Right lobe of liver (tissue), 6 donors: ENCODE measurements at regions of chr14 and their contacts with region 1.

Region 1: GRCh38 chr14:59632381-59632780 is 55.8 kb upstream of the CCDC175 start:
- DNase-seq: peak in 1 of 3 donors; percentile 25
- ATAC-seq: peak; percentile 76 to 86 (median 82)
- H3K4me3 ChIP-seq: no peak overlapping the region
- H3K27ac ChIP-seq: no peak overlapping the region
- H3K4me1 ChIP-seq: peaks cover 0 to 5% (median 0%) of the 10 kb centered on the region in 4 donors
- H3K27me3 ChIP-seq: peaks cover 0 to 9% of the 10 kb centered on the region in 2 donors
- CTCF ChIP-seq: peak; percentile 52 to 65 (median 62)
- POLR2A ChIP-seq: no peak

Region 2: DNA sequence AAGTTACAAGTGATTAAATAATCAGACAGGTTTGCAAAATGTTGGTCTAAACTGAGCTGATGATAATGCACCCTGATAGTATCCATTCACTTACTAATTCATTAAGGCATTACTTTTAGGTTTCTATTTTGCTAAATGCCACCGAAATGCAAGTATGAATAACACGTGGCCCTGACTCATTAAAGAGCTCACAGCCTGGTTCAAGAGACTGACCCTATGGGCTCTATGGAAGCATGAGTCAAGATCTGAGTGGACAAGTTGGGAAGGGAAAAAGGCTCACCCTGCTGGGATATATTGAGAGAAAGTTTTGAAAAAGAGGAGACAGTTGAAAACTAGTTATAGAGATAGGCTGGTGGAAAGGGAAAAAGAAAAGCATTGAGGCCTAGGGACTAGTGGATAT is 272.8 kb after region 1 on chr14:
- intact Hi-C with region 1: loop called in 1 of 2 experiments (anchors 10 kb)
- DNase-seq: no peak
- ATAC-seq: no peak
- H3K4me3 ChIP-seq: no peak overlapping the region
- H3K27ac ChIP-seq: no peak overlapping the region
- H3K4me1 ChIP-seq: no peaks in the 10 kb centered on the region
- H3K27me3 ChIP-seq: no peaks in the 10 kb centered on the region
- CTCF ChIP-seq: no peak
- POLR2A ChIP-seq: no peak

Region 3: GRCh38 chr14:60067882-60068281 is 435.5 kb after region 1 on chr14:
- intact Hi-C with region 1: no loop called
- DNase-seq: no peak
- ATAC-seq: no peak
- H3K4me3 ChIP-seq: no peak overlapping the region
- H3K27ac ChIP-seq: no peak overlapping the region
- H3K4me1 ChIP-seq: no peaks in the 10 kb centered on the region
- H3K27me3 ChIP-seq: no peaks in the 10 kb centered on the region
- CTCF ChIP-seq: no peak
- POLR2A ChIP-seq: no peak